ENCODE measurements at regions of chr19 and their contacts with region 1.

Region 1: GRCh38 chr19:54448774-54449700 is at the start of gene LENG8:
- DNase-seq: peak; percentile 98
- H3K4me3 Mint-ChIP-seq: peak within 1 kb of the TSS; percentile 99
- H3K27ac Mint-ChIP-seq: peak within 1 kb of the TSS; percentile 97
- H3K4me1 Mint-ChIP-seq: peaks cover 49% of the 10 kb centered on the region
- H3K27me3 Mint-ChIP-seq: no peaks in the 10 kb centered on the region
- total RNA-seq, gene LENG8: 231 to 233 TPM

Region 2: DNA sequence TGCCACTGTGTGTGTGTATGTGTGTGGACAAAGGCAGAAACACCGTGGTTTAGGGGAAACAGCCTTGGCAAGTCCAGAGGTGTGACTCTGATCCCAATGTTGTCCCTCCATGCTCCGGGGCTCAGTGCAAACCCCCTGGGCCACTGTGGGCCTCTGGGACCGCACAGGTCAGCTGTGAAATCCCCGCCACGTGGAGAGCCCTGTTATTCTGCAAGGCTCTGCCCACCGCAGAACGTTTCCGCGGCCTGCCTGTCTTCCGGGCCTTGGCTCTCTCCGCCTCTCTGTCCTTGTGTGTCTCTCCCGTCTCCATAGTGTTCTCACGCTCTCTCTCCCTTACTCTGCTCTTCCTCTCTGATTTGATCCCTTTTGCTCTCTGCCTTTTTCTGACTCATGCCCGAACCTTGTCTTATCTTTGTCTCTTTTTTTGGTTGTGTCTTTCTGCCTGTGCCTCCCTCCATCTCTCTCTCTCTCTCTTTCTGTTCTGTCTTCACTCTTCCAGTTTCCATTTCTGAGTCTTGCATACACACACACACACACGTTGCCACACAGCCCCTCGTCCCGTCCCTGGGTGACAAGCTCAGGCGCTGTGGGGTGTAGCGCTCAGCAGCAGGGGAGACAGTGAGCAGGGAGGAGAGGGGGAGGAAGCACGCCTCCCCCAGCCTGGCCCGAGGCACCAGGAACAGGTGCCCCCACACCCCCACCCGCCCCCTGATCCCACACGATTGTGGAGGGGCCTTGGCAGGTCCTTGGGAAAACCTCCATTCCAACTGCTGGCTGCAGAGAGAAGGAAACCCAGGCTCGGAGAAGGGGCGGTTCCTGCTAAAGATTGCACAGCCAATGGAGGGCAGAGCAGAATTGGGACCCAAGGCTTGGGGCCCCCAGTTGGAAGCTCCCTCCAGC is 30.8 kb before region 1 on chr19:
- CTCF ChIA-PET with region 1: no interaction called
- POLR2A ChIA-PET with region 1: no interaction called
- DNase-seq: peak; percentile 63
- H3K4me3 Mint-ChIP-seq: peak overlapping the region; percentile 28
- H3K27ac Mint-ChIP-seq: peak overlapping the region; percentile 60
- H3K4me1 Mint-ChIP-seq: peaks cover 19% of the 10 kb centered on the region
- H3K27me3 Mint-ChIP-seq: peaks cover 32% of the 10 kb centered on the region

Region 3: GRCh38 chr19:54430306-54431254 is 18.5 kb before region 1 on chr19:
- CTCF ChIA-PET with region 1: no interaction called
- POLR2A ChIA-PET with region 1: interaction called, 21 read pairs
- DNase-seq: peak; percentile 42
- H3K4me3 Mint-ChIP-seq: no peak overlapping the region
- H3K27ac Mint-ChIP-seq: no peak overlapping the region
- H3K4me1 Mint-ChIP-seq: peaks cover 12% of the 10 kb centered on the region
- H3K27me3 Mint-ChIP-seq: peaks cover 10% of the 10 kb centered on the region

Region 4: GRCh38 chr19:54463531-54464043 is 14.6 kb after region 1 on chr19 and contains the start of gene LENG9:
- CTCF ChIA-PET with region 1: interaction called, 11 read pairs
- POLR2A ChIA-PET with region 1: interaction called, 66 read pairs
- DNase-seq: peak; percentile 98
- H3K4me3 Mint-ChIP-seq: peak within 1 kb of the TSS; percentile 83
- H3K27ac Mint-ChIP-seq: peak within 1 kb of the TSS; percentile 95
- H3K4me1 Mint-ChIP-seq: peaks cover 44% of the 10 kb centered on the region
- H3K27me3 Mint-ChIP-seq: peaks cover 17% of the 10 kb centered on the region
- total RNA-seq, gene LENG9: 8.5 to 8.7 TPM

Measured in activated CD4-positive, alpha-beta memory T cell treated with anti-CD3 and anti-CD28 coated beads, Interleukin-2, amount 10 ng/mL, durations not matched to agents 7 days and 5 days (primary cell).